ENCODE measurements at regions of chr1 and their contacts with region 1.

Region 1: GRCh38 chr1:119795261-119796200 is 15.7 kb downstream of the REG4 start:
- DNase-seq: no peak
- H3K4me3 ChIP-seq: no peak overlapping the region
- CTCF ChIP-seq: no peak
- POLR2A ChIP-seq: no peak

Region 2: GRCh38 chr1:119506951-119507350 is 288.6 kb before region 1 on chr1 and contains the start of gene HSD3B1:
- intact Hi-C with region 1: no loop called
- DNase-seq: no peak
- H3K4me3 ChIP-seq: no peak within 1 kb of the TSS
- CTCF ChIP-seq: no peak
- POLR2A ChIP-seq: no peak
- total RNA-seq, gene HSD3B1: 0.30 to 10.3 (median 1.6) TPM

Region 3: DNA sequence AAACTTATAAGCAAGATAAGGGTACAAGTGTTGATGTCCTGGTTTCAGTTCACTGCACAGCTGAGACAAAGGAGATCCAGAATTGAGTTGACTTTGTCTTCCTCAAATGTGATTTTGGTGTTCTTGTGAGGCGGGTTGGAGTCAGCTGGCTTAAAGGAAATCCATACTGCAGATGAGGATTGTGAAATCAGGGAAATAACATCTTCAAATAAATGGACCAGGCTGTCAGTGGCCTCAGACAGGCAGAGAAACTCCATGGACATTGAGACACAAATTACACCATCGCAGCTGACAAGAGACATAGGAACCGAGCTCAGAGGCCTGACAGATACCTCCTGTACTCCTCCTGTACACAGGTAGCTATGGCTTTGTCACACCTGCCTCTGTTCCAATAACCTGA is 42.7 kb after region 1 on chr1:
- intact Hi-C with region 1: loop called (anchors 5 kb)
- DNase-seq: no peak
- H3K4me3 ChIP-seq: no peak overlapping the region
- CTCF ChIP-seq: no peak
- POLR2A ChIP-seq: no peak

Measured in lower leg skin (tissue), 4 donors.